Activated naive CD4-positive, alpha-beta T cell treated with anti-CD3 and anti-CD28 coated beads for 36 hours (primary cell): ENCODE measurements at regions of chr2 and their contacts with region 1.

Region 1: GRCh38 chr2:60818272-60818671 is 62.2 kb downstream of the PAPOLG start:
- DNase-seq: peak; percentile 80
- H3K4me3 Mint-ChIP-seq: no peak overlapping the region
- H3K27ac Mint-ChIP-seq: peak overlapping the region; percentile 89
- H3K4me1 Mint-ChIP-seq: peaks cover 52% of the 10 kb centered on the region
- H3K27me3 Mint-ChIP-seq: no peaks in the 10 kb centered on the region

Region 2: DNA sequence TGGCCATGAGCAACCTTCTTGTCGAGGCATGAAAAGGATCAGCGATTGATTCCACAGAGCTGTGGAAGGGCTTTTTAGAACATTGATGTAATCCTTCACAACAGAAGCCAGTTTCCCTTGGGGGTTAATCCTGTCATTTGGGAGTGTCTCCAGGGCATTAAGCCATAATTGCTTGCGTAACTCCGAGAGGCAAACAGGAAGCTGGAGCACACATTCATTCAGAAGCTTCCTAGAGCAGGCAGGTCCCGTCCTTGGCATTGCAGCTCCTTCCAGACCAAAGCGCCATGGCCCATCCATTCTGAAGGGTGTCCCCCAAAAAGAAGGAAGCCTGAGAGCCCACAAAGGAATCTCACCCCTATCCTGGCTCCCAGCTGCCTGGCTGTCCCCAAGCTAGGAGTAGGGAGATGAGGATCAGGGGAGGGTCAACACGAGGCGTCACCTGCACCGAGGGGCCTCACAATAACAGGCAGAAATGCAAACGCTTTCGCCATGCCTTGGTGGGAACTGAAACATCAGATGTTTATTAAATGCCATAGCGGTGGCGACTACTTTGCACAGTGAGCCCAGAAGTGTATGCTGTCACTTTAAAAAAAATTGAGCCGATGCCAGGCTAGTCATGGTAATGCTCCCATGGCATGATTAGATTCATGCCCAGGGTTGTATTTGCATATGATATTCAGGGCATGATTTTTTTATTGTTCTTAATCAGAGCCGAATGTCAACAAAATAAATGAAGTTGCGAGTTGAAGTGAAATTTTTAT is 604.2 kb before region 1 on chr2:
- CTCF ChIA-PET with region 1: no interaction called
- intact Hi-C with region 1: no loop called
- DNase-seq: no peak
- H3K4me3 Mint-ChIP-seq: no peak overlapping the region
- H3K27ac Mint-ChIP-seq: no peak overlapping the region
- H3K4me1 Mint-ChIP-seq: no peaks in the 10 kb centered on the region
- H3K27me3 Mint-ChIP-seq: no peaks in the 10 kb centered on the region

Region 3: GRCh38 chr2:60756191-60757041 is 61.9 kb before region 1 on chr2 and contains the start of gene PAPOLG:
- CTCF ChIA-PET with region 1: no interaction called
- intact Hi-C with region 1: loop called (anchors 1 kb)
- DNase-seq: peak; percentile 99
- H3K4me3 Mint-ChIP-seq: peak within 1 kb of the TSS; percentile 99
- H3K27ac Mint-ChIP-seq: peak within 1 kb of the TSS; percentile 97
- H3K4me1 Mint-ChIP-seq: peaks cover 40% of the 10 kb centered on the region
- H3K27me3 Mint-ChIP-seq: no peaks in the 10 kb centered on the region
- total RNA-seq, gene PAPOLG: 14.1 to 16.1 TPM

Region 4: GRCh38 chr2:60839126-60839813 is 21.0 kb after region 1 on chr2:
- CTCF ChIA-PET with region 1: interaction called, 13 read pairs
- intact Hi-C with region 1: loop called (anchors 1 kb)
- DNase-seq: no peak
- H3K4me3 Mint-ChIP-seq: no peak overlapping the region
- H3K27ac Mint-ChIP-seq: no peak overlapping the region
- H3K4me1 Mint-ChIP-seq: peaks cover 32% of the 10 kb centered on the region
- H3K27me3 Mint-ChIP-seq: no peaks in the 10 kb centered on the region

Region 5: DNA sequence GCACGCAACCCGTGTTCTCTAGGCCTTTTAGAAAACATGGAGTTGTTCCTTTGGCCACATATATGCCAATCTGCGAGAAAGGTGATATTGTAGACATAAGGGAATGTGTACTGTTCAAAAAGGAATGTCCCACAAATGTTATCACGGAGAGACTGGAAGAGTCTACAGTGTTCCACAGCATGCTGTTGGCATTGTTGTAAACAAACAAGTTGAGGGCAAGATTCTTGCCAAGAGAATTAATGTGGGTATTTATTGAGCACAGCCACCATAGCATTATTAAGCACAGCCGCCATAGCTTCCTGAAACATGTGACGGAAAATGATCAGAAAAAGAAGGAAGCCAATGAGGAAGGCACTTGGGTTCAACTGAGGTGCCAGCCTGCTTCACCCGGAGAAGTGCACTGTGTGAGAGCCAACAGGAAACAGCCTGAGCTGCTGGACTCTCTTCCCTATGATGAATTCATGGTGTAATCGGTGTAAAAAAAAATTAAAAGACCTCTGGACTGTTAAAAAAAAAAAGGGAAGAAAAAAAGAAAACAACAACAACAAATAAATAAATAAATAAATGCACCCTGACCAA is 34.1 kb after region 1 on chr2:
- CTCF ChIA-PET with region 1: no interaction called
- intact Hi-C with region 1: no loop called
- DNase-seq: no peak
- H3K4me3 Mint-ChIP-seq: no peak overlapping the region
- H3K27ac Mint-ChIP-seq: no peak overlapping the region
- H3K4me1 Mint-ChIP-seq: no peaks in the 10 kb centered on the region
- H3K27me3 Mint-ChIP-seq: peaks cover 2% of the 10 kb centered on the region

Region 6: DNA sequence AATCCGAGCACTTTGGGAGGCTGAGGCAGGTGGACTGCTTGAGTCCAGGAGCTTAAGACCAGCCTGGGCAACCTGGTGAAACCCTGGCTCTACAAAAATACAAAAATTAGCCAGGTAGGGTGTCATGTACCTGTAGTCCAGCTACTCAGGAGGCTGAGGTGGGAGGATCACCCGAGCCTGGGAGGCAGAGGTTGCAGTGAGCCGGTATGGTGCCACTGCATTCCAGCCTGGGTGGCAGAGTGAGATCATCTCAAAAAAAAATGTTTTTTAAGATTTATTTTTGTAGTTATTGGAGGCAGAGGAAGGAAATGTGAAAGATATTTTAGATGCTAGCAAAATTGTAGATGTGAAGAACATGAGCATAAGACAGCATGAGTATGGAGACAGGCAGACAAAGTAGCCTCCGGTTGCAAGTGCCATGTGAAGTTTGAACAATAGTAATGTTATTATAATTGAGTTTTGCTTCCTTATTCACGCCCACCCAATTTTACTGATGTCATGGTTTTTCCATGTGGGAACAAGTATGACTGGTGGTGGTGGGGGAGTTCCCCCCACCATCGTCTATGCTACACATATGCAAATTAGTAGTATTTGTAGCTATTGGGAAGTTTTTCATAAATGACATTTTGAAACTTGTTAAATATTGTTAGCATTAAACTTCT is 81.1 kb after region 1 on chr2:
- CTCF ChIA-PET with region 1: interaction called, 3 read pairs
- intact Hi-C with region 1: loop called (anchors 1 kb)
- DNase-seq: peak; percentile 77
- H3K4me3 Mint-ChIP-seq: peak overlapping the region; percentile 24
- H3K27ac Mint-ChIP-seq: peak overlapping the region; percentile 90
- H3K4me1 Mint-ChIP-seq: peaks cover 51% of the 10 kb centered on the region
- H3K27me3 Mint-ChIP-seq: no peaks in the 10 kb centered on the region

Region 7: GRCh38 chr2:60976875-60977561 is 158.7 kb after region 1 on chr2:
- CTCF ChIA-PET with region 1: interaction called, 5 read pairs
- intact Hi-C with region 1: loop called (anchors 1 kb)
- DNase-seq: peak; percentile 48
- H3K4me3 Mint-ChIP-seq: no peak overlapping the region
- H3K27ac Mint-ChIP-seq: peak overlapping the region; percentile 69
- H3K4me1 Mint-ChIP-seq: peaks cover 53% of the 10 kb centered on the region
- H3K27me3 Mint-ChIP-seq: no peaks in the 10 kb centered on the region

Region 8: GRCh38 chr2:61144697-61145268 is 326.5 kb after region 1 on chr2:
- CTCF ChIA-PET with region 1: no interaction called
- intact Hi-C with region 1: loop called (anchors 1 kb)
- DNase-seq: peak; percentile 97
- H3K4me3 Mint-ChIP-seq: peak overlapping the region; percentile 92
- H3K27ac Mint-ChIP-seq: peak overlapping the region; percentile 85
- H3K4me1 Mint-ChIP-seq: peaks cover 6% of the 10 kb centered on the region
- H3K27me3 Mint-ChIP-seq: no peaks in the 10 kb centered on the region